AG04449 (cell line): ENCODE measurements at regions of chr12 and their contacts with region 1.

Region 1: DNA sequence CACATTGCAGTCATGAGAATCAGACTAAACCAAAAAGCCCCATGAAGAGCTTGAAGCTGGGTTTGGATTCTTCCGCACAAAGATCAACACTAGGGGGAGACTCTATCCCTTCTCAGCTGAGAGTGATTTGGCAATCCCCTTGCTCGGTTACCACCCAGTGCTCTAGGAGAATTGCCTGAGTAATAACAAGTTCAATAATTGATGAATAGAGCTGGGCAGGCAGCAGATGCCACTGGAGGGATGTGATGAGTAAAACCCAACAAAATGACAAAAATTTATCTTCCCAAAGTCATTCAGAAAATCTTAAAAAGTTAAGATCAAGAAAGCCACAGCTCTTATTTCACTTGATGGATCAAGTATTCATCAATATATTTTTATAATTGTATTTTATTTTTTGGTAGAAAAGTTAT is 185.6 kb upstream of the ARID2 start:
- DNase-seq: peak; percentile 45
- H3K4me3 ChIP-seq: no peak overlapping the region
- CTCF ChIP-seq: peak; percentile 70

Region 2: DNA sequence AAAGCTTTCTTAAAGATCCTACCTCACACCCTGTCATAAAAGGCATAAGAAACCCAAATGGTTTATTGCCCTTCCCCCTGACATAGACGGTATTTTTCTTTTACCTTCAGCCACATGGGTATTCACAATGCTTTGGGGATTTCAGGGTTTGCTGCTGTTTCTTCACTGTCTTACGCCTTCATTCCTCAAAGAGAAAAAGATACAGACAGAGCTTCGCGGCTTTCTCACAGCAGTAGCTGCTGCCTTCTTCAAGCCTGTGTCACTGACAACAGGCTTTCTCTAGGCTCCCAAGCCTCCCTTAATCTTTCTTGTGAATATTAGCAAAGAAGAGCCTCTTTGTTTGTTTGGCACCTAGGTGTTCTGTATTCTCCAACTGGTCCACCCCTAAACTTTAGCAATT is 11.8 kb before region 1 on chr12:
- CTCF ChIA-PET with region 1: interaction called, 26 read pairs
- POLR2A ChIA-PET with region 1: no interaction called
- DNase-seq: no peak
- H3K4me3 ChIP-seq: no peak overlapping the region
- CTCF ChIP-seq: no peak

Region 3: GRCh38 chr12:45557016-45557415 is 13.1 kb after region 1 on chr12:
- CTCF ChIA-PET with region 1: interaction called, 12 read pairs
- POLR2A ChIA-PET with region 1: no interaction called
- DNase-seq: no peak
- H3K4me3 ChIP-seq: no peak overlapping the region
- CTCF ChIP-seq: no peak

Region 4: GRCh38 chr12:45718306-45718705 is 174.4 kb after region 1 on chr12:
- CTCF ChIA-PET with region 1: interaction called, 14 read pairs
- POLR2A ChIA-PET with region 1: no interaction called
- DNase-seq: no peak
- H3K4me3 ChIP-seq: no peak overlapping the region
- CTCF ChIP-seq: no peak

Region 5: GRCh38 chr12:45728630-45729232 is 184.8 kb after region 1 on chr12:
- CTCF ChIA-PET with region 1: interaction called, 50 read pairs
- POLR2A ChIA-PET with region 1: interaction called, 8 read pairs
- DNase-seq: peak; percentile 71
- H3K4me3 ChIP-seq: peak overlapping the region; percentile 78
- CTCF ChIP-seq: peak; percentile 99

Region 6: DNA sequence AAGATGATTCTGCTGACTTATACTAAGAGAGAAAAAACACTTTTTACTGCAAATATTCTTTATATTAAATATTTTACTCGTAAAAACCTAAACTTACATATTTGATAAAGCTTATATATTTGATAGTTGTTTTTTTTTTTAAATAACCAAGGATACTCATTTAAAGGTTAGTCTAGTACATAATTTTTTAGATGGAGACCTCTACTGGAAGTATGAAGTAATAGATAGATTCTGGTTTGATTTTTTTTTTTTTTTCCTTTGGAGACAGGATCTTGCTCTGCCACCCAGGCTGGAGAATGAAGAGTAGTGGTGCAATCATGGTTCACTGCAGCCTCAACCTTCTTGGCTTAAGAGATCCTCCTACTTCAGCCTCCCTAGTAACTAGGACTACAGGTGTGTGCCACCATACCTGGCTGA is 202.0 kb after region 1 on chr12:
- CTCF ChIA-PET with region 1: interaction called, 54 read pairs
- POLR2A ChIA-PET with region 1: no interaction called
- DNase-seq: no peak
- H3K4me3 ChIP-seq: no peak overlapping the region
- CTCF ChIP-seq: peak; percentile 4